Head of caudate nucleus (tissue), 42 donors: ENCODE measurements at regions of chr5 and their contacts with region 1.

Region 1: GRCh38 chr5:56951946-56952691 is at the start of gene MIER3:
- DNase-seq: peak; percentile 11 to 93 (median 83)

Region 2: GRCh38 chr5:56909294-56910209 is 42.6 kb before region 1 on chr5 and contains the start of gene SETD9:
- intact Hi-C with region 1: loop called (anchors 5 kb)
- DNase-seq: peak; percentile 91 to 98 (median 96)

Region 3: DNA sequence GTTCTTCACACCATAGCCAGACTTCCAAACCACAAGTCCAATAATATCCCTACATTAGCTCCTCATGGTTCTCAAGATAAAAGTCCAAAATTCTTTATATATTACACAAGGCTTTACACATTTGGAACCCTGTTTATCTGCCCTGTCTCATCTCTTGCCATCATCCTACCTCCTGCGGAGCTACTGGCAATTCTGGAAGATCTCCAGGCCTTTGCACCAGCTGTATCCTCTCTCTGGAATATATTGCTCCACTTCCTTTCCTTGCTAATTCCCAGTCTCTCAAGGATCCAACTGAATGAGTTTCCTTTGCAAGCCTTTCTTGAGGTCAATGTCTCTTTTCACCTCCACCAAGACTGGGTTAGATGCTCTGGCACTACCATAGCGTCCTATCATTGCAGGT is 41.1 kb after region 1 on chr5:
- intact Hi-C with region 1: no loop called
- DNase-seq: no peak

Region 4: GRCh38 chr5:57032151-57032551 is 80.0 kb after region 1 on chr5:
- intact Hi-C with region 1: no loop called
- DNase-seq: no peak